ENCODE measurements at regions of chr2 and their contacts with region 1.

Region 1: GRCh38 chr2:222318026-222318711 is 19.4 kb upstream of the PAX3 start:
- DNase-seq: peak; percentile 72
- H3K4me3 ChIP-seq: peak overlapping the region; percentile 36 to 47 (median 42)
- H3K27ac ChIP-seq: no peak overlapping the region
- H3K4me1 ChIP-seq: peaks cover 16% of the 10 kb centered on the region
- H3K27me3 ChIP-seq: peaks cover 26% of the 10 kb centered on the region
- CTCF ChIP-seq: peak; percentile 37 to 67

Region 2: DNA sequence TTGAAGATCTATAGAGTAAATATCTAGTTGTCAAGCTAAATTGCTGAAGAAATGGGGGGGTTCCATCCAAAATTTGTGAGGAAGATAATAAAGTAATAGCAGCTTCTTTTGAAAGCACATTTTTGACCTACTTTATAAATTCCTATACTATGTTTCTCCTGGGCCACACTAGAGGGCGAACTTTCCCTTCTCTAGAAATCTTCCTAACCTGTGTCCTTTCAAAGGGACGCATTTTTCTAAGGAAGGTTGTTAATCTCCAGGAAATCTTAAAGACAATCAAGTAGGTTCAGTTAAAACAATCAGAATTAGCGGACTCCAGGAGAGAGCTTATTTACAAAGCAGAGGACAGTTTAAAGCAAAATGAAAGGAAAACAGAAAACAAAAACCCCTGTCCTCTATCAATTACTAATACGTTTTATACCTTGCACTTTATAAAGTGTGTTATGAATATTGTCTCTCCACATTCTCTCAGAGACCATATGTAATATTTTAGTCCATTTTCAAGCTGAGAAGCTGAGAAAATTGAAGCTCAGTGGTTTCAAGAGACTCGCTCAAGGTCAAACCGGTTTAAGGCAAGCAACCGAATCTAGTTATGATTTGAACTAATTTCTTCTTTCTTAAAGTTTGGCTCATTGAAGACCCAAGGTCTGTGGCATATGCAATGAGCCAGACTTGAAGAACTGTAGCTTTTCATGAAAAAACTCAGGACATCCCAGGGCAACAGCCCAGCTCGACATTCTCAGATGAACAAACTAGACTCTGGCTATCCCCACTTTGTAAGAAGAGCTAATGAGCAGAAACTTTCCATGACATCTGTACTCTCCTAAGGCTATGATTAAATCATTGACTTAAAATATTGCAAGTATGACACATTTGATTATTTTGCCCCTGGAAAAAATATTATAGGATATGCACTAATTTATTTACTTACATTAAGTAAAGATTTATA is 293.0 kb before region 1 on chr2:
- CTCF ChIA-PET with region 1: no interaction called
- dilution Hi-C with region 1: no loop called
- in situ Hi-C with region 1: no loop called
- intact Hi-C with region 1: loop called (anchors 5 kb)
- DNase-seq: peak; percentile 14
- H3K4me3 ChIP-seq: no peak overlapping the region
- H3K27ac ChIP-seq: no peak overlapping the region
- H3K4me1 ChIP-seq: no peaks in the 10 kb centered on the region
- H3K27me3 ChIP-seq: no peaks in the 10 kb centered on the region
- CTCF ChIP-seq: peak; percentile 62 to 76

Region 3: GRCh38 chr2:222057347-222058073 is 260.7 kb before region 1 on chr2:
- CTCF ChIA-PET with region 1: no interaction called
- dilution Hi-C with region 1: no loop called
- in situ Hi-C with region 1: loop called in 1 of 2 experiments (anchors 25 kb)
- intact Hi-C with region 1: loop called (anchors 1 kb)
- DNase-seq: no peak
- H3K4me3 ChIP-seq: no peak overlapping the region
- H3K27ac ChIP-seq: no peak overlapping the region
- H3K4me1 ChIP-seq: no peaks in the 10 kb centered on the region
- H3K27me3 ChIP-seq: peaks cover 5% of the 10 kb centered on the region
- CTCF ChIP-seq: peak; percentile 54 to 62

Region 4: DNA sequence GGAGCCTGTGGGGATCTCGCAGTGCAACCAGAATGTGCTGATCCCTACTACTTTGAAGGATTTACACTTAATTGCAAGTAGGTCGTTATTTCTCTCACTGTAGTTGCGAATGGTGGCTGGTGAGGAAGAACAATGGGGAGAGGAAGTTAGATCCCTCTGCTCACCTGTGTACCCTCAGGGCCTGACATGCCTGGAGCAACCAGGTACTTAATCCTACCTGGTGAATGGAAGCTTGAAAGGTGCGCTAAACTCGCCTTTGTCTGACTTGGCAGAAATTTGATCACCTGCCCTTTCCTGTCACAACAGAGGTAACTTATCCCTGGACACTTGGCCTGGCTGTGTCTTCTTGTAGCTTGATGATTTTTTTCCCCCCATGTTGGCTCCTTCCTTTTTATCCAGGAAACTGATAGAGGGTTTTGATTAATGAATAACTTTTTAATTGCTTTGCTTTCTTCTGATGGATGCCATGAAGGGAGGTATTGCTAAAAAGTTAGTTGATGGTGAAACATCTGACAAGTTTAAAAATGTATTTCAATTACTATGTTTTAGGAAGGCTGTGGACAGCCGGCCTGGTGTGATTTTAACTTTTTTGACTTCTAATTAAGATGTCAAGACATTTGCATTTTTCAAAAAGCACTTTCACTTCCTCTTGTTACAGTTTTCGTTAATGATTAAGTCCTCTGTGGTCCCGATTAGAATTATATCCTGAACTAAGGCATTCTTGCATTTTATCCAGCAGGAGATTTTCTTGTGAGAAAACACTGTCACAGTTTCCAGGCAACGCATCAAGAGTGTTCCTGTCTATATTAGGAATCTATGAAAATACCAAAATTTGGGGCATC is 115.4 kb after region 1 on chr2:
- CTCF ChIA-PET with region 1: no interaction called
- dilution Hi-C with region 1: no loop called
- in situ Hi-C with region 1: no loop called
- intact Hi-C with region 1: loop called (anchors 5 kb)
- DNase-seq: no peak
- H3K4me3 ChIP-seq: no peak overlapping the region
- H3K27ac ChIP-seq: no peak overlapping the region
- H3K4me1 ChIP-seq: no peaks in the 10 kb centered on the region
- H3K27me3 ChIP-seq: no peaks in the 10 kb centered on the region
- CTCF ChIP-seq: no peak

Region 5: GRCh38 chr2:222518570-222519381 is 200.6 kb after region 1 on chr2:
- CTCF ChIA-PET with region 1: interaction called, 12 read pairs
- dilution Hi-C with region 1: no loop called
- in situ Hi-C with region 1: no loop called
- intact Hi-C with region 1: no loop called
- DNase-seq: peak; percentile 94
- H3K4me3 ChIP-seq: peak overlapping the region in 1 of 3 experiments; percentile 11
- H3K27ac ChIP-seq: peak overlapping the region; percentile 56
- H3K4me1 ChIP-seq: peaks cover 13% of the 10 kb centered on the region
- H3K27me3 ChIP-seq: no peaks in the 10 kb centered on the region
- CTCF ChIP-seq: no peak

Region 6: DNA sequence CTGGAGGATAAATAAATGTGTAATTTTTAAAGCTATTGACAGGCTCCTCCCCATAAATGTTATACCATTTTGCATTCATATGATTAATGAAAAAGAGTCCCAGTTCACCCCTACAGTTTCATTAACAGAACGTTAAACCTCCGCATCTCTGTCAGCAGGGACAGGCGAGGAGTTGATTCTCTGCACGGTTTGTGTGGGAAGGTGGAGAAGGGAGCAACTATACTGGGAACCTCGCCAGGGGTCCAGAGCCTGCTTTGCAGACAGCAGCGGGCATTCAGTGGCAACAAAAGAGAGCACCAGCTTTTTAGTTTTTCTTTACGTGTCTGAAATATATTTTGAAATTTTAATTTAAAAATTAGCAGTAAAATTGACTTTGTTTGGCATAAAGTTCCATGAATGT is 236.3 kb after region 1 on chr2:
- CTCF ChIA-PET with region 1: no interaction called
- dilution Hi-C with region 1: no loop called
- in situ Hi-C with region 1: loop called in 1 of 2 experiments (anchors 10 kb)
- intact Hi-C with region 1: no loop called
- DNase-seq: no peak
- H3K4me3 ChIP-seq: no peak overlapping the region
- H3K27ac ChIP-seq: no peak overlapping the region
- H3K4me1 ChIP-seq: no peaks in the 10 kb centered on the region
- H3K27me3 ChIP-seq: no peaks in the 10 kb centered on the region
- CTCF ChIP-seq: no peak

Region 7: DNA sequence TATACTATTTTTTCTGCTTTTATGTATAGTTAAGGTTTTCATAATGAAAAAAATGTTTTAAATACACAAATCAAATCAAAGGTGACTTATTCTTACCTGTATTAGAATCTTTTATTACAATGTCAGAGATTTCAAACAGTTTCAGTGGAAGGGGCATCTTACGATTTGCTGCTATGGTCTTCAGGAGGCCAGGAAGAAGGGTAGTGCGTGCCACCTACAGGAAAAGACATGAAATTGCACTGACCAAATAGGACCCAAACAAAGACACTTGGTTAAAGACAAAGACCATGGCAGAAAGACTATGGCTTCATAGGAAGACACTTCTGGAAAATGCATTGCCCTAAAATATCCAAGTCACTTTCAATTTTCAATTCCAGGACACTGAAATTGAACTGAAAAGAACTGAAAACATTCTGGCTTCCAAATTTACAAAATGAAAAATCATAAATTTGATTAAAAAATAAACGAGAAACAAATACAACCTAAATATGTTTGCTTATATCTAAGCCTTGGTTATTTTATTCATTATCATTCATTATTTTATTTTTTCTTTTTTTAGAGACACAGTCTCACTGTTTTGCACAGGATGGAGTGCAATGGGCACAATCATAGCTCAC is 295.7 kb after region 1 on chr2:
- CTCF ChIA-PET with region 1: interaction called, 6 read pairs
- dilution Hi-C with region 1: no loop called
- in situ Hi-C with region 1: no loop called
- intact Hi-C with region 1: loop called (anchors 1 kb)
- DNase-seq: peak; percentile 14
- H3K4me3 ChIP-seq: no peak overlapping the region
- H3K27ac ChIP-seq: no peak overlapping the region
- H3K4me1 ChIP-seq: no peaks in the 10 kb centered on the region
- H3K27me3 ChIP-seq: no peaks in the 10 kb centered on the region
- CTCF ChIP-seq: peak; percentile 72 to 78